Activated T-helper 2 cell treated with anti-CD3 and anti-CD28 coated beads, Interferon-gamma antibody, Interleukin-2, Interleukin-4, amounts not matched to agents 10 μg/mL and 5 μg/mL and 100 μg/mL, durations not matched to agents 14 hours and 24 hours and 36 hours (primary cell): ENCODE measurements at regions of chr6 and their contacts with region 1.

Region 1: GRCh38 chr6:151390276-151391032 is 905 bp downstream of the ZBTB2 start:
- DNase-seq: peak; percentile 98
- H3K4me3 Mint-ChIP-seq: peak overlapping the region; percentile 49
- H3K27ac Mint-ChIP-seq: peak overlapping the region; percentile 55
- H3K4me1 Mint-ChIP-seq: peaks cover 48% of the 10 kb centered on the region
- H3K27me3 Mint-ChIP-seq: no peaks in the 10 kb centered on the region

Region 2: GRCh38 chr6:150865406-150866146 is 524.9 kb before region 1 on chr6 and contains the start of gene MTHFD1L:
- intact Hi-C with region 1: loop called (anchors 5 kb)
- DNase-seq: peak; percentile 69
- H3K4me3 Mint-ChIP-seq: peak within 1 kb of the TSS; percentile 94
- H3K27ac Mint-ChIP-seq: peak within 1 kb of the TSS; percentile 85
- H3K4me1 Mint-ChIP-seq: peaks cover 40% of the 10 kb centered on the region
- H3K27me3 Mint-ChIP-seq: peaks cover 19% of the 10 kb centered on the region
- total RNA-seq, gene MTHFD1L: 92.2 and 93.4 TPM in 2 replicates

Region 3: GRCh38 chr6:151370509-151371078 is 19.9 kb before region 1 on chr6:
- intact Hi-C with region 1: loop called (anchors 1 kb)
- DNase-seq: no peak
- H3K4me3 Mint-ChIP-seq: no peak overlapping the region
- H3K27ac Mint-ChIP-seq: no peak overlapping the region
- H3K4me1 Mint-ChIP-seq: peaks cover 39% of the 10 kb centered on the region
- H3K27me3 Mint-ChIP-seq: no peaks in the 10 kb centered on the region

Region 4: GRCh38 chr6:151379933-151380847 is 10.3 kb before region 1 on chr6:
- intact Hi-C with region 1: loop called (anchors 1 kb)
- DNase-seq: peak; percentile 31
- H3K4me3 Mint-ChIP-seq: peak overlapping the region; percentile 85
- H3K27ac Mint-ChIP-seq: peak overlapping the region; percentile 97
- H3K4me1 Mint-ChIP-seq: peaks cover 59% of the 10 kb centered on the region
- H3K27me3 Mint-ChIP-seq: no peaks in the 10 kb centered on the region

Region 5: GRCh38 chr6:151440930-151441329 is 50.5 kb after region 1 on chr6:
- intact Hi-C with region 1: no loop called
- DNase-seq: no peak
- H3K4me3 Mint-ChIP-seq: no peak overlapping the region
- H3K27ac Mint-ChIP-seq: no peak overlapping the region
- H3K4me1 Mint-ChIP-seq: peaks cover 22% of the 10 kb centered on the region
- H3K27me3 Mint-ChIP-seq: no peaks in the 10 kb centered on the region

Region 6: GRCh38 chr6:151451950-151452749 is 61.7 kb after region 1 on chr6 and contains the start of gene RMND1:
- intact Hi-C with region 1: loop called (anchors 1 kb)
- DNase-seq: peak; percentile 99
- H3K4me3 Mint-ChIP-seq: peak within 1 kb of the TSS; percentile 97
- H3K27ac Mint-ChIP-seq: peak within 1 kb of the TSS; percentile 82
- H3K4me1 Mint-ChIP-seq: peaks cover 27% of the 10 kb centered on the region
- H3K27me3 Mint-ChIP-seq: no peaks in the 10 kb centered on the region
- total RNA-seq, gene RMND1: 18.5 and 20.5 TPM in 2 replicates

Region 7: DNA sequence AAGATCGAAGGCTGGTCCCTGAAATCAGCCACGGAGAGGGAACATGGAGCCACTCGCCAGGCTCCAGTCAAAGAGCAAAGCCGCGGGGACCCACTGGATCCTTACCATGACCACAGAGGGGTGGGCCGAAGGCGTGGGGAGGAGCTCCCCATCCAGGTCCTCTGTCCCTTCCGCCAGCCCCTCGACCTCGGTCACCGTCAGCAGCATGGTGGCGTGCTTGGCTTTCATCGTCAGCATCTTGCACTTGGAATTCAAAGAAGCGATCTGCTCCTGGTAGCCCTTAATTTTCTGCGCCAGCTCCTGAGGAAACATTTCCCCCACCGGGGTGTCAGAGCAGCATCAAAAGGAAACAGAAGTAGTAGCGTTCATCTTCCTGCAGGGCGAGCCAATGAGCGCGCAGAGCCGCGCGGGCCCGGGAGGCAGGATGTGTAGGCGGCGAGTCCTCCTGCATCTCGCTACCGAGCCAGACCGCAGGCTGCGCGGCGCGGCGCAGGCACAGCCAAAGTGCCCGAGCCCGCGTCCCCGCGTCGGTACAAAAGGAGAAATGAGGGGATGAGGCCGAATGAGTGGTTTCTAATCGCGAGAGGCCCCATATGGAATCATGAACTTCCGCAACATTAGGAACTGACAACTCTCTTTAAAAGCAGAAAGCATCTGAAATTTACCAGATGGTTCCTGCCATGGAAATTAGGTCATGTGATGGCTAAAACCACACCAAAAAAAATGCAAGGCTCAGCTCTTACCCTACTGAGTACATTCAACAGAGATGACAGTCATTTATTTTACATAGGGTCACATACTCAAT is 911.5 kb after region 1 on chr6:
- intact Hi-C with region 1: loop called (anchors 10 kb)
- DNase-seq: peak; percentile 86
- H3K4me3 Mint-ChIP-seq: peak overlapping the region; percentile 99
- H3K27ac Mint-ChIP-seq: peak overlapping the region; percentile 99
- H3K4me1 Mint-ChIP-seq: peaks cover 22% of the 10 kb centered on the region
- H3K27me3 Mint-ChIP-seq: no peaks in the 10 kb centered on the region

Region 8: DNA sequence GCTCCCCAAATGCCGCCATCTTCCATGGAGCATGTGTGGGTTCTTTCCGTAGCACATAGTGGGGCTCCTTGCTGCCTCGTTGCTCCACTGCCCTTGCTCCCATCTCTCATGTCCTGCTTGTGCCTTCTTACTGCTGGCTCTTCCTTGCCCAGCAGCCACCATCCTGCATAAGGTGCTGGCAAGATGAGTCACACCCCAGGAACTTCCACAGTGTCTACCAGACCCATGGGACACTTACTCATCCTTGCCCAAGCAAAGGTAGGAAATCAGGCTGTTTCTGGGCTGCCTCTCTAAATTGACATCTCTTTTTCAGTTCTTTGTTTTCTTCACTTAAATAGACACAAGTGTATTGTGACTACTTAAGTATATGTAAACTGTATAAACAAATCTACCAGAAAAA is 1780.1 kb after region 1 on chr6:
- intact Hi-C with region 1: no loop called
- DNase-seq: no peak
- H3K4me3 Mint-ChIP-seq: no peak overlapping the region
- H3K27ac Mint-ChIP-seq: no peak overlapping the region
- H3K4me1 Mint-ChIP-seq: no peaks in the 10 kb centered on the region
- H3K27me3 Mint-ChIP-seq: no peaks in the 10 kb centered on the region